Activated naive CD4-positive, alpha-beta T cell treated with anti-CD3 and anti-CD28 coated beads for 36 hours (primary cell): ENCODE measurements at regions of chr10 and their contacts with region 1.

Region 1: GRCh38 chr10:6144406-6145165 is 55.8 kb downstream of the RBM17 start:
- DNase-seq: peak; percentile 91
- H3K4me3 Mint-ChIP-seq: peak overlapping the region; percentile 83
- H3K27ac Mint-ChIP-seq: peak overlapping the region; percentile 86
- H3K4me1 Mint-ChIP-seq: peaks cover 80% of the 10 kb centered on the region
- H3K27me3 Mint-ChIP-seq: no peaks in the 10 kb centered on the region

Region 2: DNA sequence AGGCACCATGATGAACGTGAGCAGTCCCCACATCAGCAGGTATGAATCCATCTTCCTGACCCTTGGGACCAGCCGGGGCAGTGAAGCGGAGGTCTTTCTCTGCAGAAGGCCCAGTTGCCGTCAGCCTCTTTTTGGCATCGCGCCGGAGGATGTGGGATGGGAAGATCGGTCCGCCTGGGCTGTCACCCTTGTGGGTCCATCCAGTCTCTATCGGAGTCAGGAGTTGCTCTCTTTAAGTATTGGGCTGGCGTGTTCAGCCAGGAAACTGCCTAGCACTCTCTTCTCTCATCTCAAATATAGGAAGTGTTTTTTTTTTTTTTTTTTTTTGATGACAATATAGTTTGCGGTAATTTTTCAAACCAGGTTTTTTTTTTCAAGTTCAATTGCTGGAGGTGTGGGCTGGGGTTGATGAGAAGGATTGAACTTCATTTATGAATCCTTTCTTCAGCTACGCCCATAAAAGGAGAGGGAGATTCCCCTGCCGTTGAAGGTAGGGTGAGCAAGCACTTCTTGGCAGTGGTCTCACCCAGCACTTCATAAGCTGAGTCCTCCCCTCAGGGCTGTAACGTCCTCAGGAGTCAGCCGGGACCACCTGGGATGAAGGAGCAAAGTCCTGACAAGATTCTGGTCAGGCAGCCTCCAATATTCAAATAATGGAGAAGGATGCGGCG is 82.3 kb before region 1 on chr10 and contains the start of gene IL2RA:
- CTCF ChIA-PET with region 1: no interaction called
- intact Hi-C with region 1: loop called (anchors 2 kb)
- DNase-seq: peak; percentile 83
- H3K4me3 Mint-ChIP-seq: peak within 1 kb of the TSS; percentile 86
- H3K27ac Mint-ChIP-seq: peak within 1 kb of the TSS; percentile 94
- H3K4me1 Mint-ChIP-seq: peaks cover 46% of the 10 kb centered on the region
- H3K27me3 Mint-ChIP-seq: no peaks in the 10 kb centered on the region
- total RNA-seq, gene IL2RA: 443 to 471 TPM

Region 3: GRCh38 chr10:6120691-6121090 is 23.9 kb before region 1 on chr10:
- CTCF ChIA-PET with region 1: no interaction called
- intact Hi-C with region 1: loop called (anchors 1 kb)
- DNase-seq: no peak
- H3K4me3 Mint-ChIP-seq: no peak overlapping the region
- H3K27ac Mint-ChIP-seq: no peak overlapping the region
- H3K4me1 Mint-ChIP-seq: peaks cover 31% of the 10 kb centered on the region
- H3K27me3 Mint-ChIP-seq: peaks cover 3% of the 10 kb centered on the region

Region 4: GRCh38 chr10:6128591-6129251 is 15.9 kb before region 1 on chr10:
- CTCF ChIA-PET with region 1: interaction called, 3 read pairs
- intact Hi-C with region 1: loop called (anchors 1 kb)
- DNase-seq: no peak
- H3K4me3 Mint-ChIP-seq: no peak overlapping the region
- H3K27ac Mint-ChIP-seq: peak overlapping the region; percentile 89
- H3K4me1 Mint-ChIP-seq: peaks cover 41% of the 10 kb centered on the region
- H3K27me3 Mint-ChIP-seq: peaks cover 3% of the 10 kb centered on the region

Region 5: DNA sequence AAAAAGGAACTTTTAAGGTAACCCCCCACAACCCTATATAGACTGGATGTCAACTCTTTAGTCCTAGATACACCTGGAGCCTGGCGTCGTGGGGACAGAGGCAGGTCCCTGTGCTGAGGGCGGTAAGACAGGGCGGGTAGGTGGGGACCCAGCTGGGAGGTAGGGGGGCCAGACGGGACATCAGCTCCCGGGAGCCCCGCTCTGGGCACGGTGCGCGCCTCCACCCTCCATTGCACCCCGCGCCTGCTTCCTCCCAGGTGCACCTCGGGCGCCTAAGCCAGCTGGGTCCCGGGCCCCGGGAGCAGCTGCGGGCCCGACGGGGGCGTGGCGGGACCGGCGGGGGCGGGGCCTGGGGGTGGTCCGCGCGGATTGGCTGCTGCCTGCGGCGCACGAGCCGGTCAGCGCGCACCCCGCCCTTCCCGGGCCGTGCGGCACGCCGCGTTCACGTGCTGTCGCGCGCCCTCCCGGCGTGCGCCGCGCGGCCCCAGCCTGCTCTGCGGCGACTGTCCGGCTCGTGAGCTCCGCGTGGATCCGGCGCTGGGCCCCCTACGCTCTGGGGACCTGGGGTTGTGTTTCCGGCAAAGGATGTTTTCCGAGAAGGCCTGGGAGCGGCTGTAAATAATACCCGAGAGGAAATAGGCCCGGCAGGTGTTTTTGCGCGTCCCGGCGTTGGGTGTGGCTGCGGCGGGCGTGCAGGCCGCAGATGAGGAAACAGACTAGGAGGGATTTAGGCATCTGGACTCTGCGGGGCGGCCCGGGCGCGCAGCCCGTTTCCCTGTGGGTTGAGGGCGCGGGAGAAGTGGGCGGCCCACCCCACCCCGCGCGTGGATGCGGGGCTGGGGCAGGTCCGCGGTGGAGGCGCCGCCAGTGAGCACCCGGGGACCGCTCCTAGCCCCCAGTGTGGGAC is 19.0 kb after region 1 on chr10:
- CTCF ChIA-PET with region 1: interaction called, 6 read pairs
- intact Hi-C with region 1: loop called (anchors 1 kb)
- DNase-seq: peak; percentile 92
- H3K4me3 Mint-ChIP-seq: peak overlapping the region; percentile 98
- H3K27ac Mint-ChIP-seq: peak overlapping the region; percentile 94
- H3K4me1 Mint-ChIP-seq: peaks cover 57% of the 10 kb centered on the region
- H3K27me3 Mint-ChIP-seq: no peaks in the 10 kb centered on the region

Region 6: DNA sequence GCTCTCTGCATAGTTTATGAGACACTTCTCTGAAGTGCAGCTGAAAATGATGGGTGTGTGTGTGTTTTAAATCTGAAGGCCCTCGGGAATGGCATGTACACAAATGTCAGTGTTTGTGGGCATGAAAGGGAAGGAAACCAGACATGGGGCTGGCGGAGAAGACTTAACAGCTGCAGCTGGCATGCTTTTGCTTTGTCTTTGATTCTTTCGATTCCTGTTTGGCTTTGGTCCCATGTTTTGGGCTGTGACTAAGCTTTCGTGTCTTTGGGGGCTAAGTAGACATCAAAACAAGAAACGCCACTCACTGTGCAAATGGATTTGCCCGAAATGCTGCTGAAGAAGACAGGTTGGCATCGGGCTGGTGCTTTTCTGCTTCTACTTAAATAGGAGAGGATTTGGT is 237.5 kb after region 1 on chr10:
- CTCF ChIA-PET with region 1: no interaction called
- intact Hi-C with region 1: no loop called
- DNase-seq: peak; percentile 80
- H3K4me3 Mint-ChIP-seq: peak overlapping the region; percentile 38
- H3K27ac Mint-ChIP-seq: peak overlapping the region; percentile 70
- H3K4me1 Mint-ChIP-seq: peaks cover 27% of the 10 kb centered on the region
- H3K27me3 Mint-ChIP-seq: no peaks in the 10 kb centered on the region

Region 7: DNA sequence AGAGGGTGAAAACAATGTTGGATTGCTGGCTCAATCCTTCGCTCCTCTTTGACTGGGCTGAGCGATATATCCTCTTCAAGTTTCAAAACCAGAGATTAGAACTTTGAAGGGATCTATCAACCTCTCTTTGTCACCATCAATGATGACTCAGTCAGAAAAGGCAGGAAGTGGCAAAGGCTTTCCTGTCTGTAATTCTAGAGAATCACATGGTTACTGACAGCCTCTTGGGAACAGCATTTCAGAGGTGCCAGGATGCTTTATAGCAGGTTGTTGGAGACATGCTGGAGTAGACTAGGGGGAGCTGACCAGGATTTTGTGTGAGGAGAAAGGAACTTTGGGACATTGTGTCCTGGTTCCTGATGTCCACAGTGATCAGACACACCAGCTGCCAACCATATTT is 354.2 kb after region 1 on chr10:
- CTCF ChIA-PET with region 1: no interaction called
- intact Hi-C with region 1: loop called (anchors 5 kb)
- DNase-seq: peak; percentile 67
- H3K4me3 Mint-ChIP-seq: peak overlapping the region; percentile 20
- H3K27ac Mint-ChIP-seq: peak overlapping the region; percentile 85
- H3K4me1 Mint-ChIP-seq: peaks cover 47% of the 10 kb centered on the region
- H3K27me3 Mint-ChIP-seq: no peaks in the 10 kb centered on the region